ENCODE measurements at regions of chr15 and their contacts with region 1.

Region 1: GRCh38 chr15:40274350-40275274 is 8.3 kb downstream of the ANKRD63 start:
- DNase-seq: no peak
- H3K4me3 ChIP-seq: no peak overlapping the region
- H3K27me3 ChIP-seq: peaks cover 6% of the 10 kb centered on the region; the same call in 1 of the 2 replicates
- CTCF ChIP-seq: peak; percentile 100

Region 2: GRCh38 chr15:40038638-40039543 is 235.7 kb before region 1 on chr15 and contains the start of gene SRP14:
- CTCF ChIA-PET with region 1: interaction called, 35 read pairs
- POLR2A ChIA-PET with region 1: no interaction called
- DNase-seq: peak; percentile 60
- H3K4me3 ChIP-seq: peak within 1 kb of the TSS; percentile 99
- H3K27me3 ChIP-seq: no peaks in the 10 kb centered on the region
- CTCF ChIP-seq: no peak
- polyA plus RNA-seq, gene SRP14: 305 and 564 TPM in 2 replicates

Region 3: DNA sequence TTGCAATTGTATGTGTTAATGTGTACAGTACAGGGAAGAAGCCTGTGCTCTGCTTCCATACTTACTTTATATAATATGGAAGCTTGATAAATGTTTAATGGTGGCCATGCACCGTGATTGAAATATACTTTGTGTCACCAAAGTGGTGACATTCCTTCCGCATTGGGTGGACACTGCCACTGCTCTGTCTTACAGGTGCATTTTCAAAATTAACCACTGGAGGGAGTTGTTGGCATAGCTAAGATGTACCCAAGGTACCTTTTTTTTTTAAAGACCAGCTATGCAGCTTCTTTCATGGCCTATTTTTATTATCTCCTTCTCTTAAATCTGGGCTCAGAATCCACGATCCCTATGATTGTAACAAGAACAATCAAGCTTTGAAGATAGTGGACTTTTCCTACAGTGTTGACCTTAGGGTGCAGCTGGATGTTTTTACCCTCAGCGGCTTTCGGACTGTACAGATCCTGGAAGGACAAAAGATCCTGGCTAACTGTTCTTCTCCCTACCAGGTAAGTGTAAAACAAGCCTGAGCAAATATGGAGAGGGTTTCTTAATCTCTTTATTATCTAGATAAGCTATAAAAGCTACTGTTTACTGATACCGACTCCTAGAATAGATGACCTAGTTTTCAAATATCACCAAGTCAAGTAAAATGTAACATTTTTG is 57.3 kb before region 1 on chr15:
- CTCF ChIA-PET with region 1: interaction called, 494 read pairs
- POLR2A ChIA-PET with region 1: no interaction called
- DNase-seq: no peak
- H3K4me3 ChIP-seq: no peak overlapping the region
- H3K27me3 ChIP-seq: no peaks in the 10 kb centered on the region
- CTCF ChIP-seq: peak; percentile 72

Region 4: DNA sequence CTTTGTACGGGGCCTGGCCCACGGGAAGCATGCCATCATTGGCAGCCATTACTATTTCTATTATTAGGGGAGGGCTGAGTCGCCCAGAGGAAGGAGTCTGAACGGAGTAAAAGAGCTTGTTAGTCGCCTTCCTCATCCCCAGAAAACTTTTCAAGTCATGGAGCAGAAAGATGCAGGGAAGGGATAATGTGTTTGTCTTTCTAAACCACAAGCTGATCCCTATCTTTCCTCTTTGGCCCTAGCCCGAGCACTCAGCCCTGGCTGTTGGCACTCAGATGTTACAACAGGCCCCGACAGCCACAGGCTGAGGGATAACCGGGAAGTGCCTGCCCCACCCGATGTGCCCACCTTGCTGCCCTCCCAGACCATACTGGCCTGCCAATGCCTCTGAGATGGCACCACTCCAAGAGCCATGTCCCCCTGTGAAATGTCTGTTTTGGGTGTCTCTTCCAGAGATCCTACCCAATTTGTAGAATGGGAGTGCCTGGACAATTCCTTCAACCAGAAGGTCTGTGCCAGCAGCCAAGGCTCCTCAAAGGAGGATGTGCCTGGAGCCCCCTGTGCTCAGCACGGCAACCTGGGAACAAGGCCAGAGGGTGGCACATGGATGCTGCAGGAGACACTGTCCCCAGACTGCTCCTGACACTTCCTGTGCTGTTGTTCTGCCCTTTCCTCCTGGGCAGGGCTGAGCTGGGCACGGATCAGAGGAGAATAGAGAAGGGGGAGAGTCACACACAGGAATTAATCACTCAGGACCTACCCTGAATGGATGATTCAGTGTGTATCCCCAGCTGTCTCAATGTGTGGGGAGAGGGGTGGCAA is 24.9 kb before region 1 on chr15:
- CTCF ChIA-PET with region 1: interaction called, 19 read pairs
- POLR2A ChIA-PET with region 1: no interaction called
- DNase-seq: no peak
- H3K4me3 ChIP-seq: no peak overlapping the region
- H3K27me3 ChIP-seq: peaks cover 61% of the 10 kb centered on the region
- CTCF ChIP-seq: no peak

Region 5: DNA sequence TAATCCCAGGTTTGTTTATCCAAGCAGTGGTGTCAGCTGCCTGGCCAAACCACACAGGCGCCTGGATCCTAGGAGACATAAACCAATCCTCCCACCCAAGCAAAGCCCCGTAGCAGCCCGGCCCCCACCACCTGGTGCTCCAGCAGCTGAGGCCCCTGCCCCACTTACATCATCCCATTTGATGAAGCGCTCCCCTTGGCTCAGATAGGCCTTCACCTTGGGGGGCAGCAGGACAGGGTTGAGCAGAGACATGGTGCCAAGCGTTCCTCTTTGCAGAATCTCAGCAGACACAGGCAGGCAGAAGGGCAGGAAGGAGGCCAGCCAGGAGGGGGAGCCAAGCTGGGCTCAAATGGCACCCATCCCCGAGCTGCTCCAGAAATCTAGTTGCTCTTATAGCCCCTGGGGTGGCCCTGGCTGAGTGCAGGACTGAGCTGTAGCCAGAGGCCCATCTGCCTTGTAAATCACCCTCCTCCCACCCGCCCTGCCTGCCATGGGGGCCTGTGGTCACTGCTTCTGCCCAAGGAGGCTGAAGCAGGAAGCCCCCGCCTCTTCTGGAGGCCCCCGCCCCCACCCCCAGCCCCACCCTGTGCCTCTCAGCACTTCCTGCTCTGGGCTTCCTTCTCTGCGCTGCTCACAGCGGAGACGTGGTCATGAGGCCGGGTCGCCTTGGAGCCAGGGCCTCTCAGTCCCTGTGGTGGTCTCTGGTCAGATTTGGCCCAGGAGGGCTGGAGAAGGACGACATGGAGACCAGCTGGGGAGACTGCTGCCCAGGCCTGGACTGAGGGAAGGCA is 33.0 kb after region 1 on chr15 and contains the start of gene PLCB2:
- CTCF ChIA-PET with region 1: interaction called, 127 read pairs
- POLR2A ChIA-PET with region 1: no interaction called
- DNase-seq: no peak
- H3K4me3 ChIP-seq: no peak within 1 kb of the TSS
- H3K27me3 ChIP-seq: peaks cover 25% of the 10 kb centered on the region
- CTCF ChIP-seq: 0 out of 2 replicates have a peak, but pooled peaks have one; percentile 27
- polyA plus RNA-seq, gene PLCB2: 0.22 and 0.47 TPM in 2 replicates

Region 6: GRCh38 chr15:40344631-40345120 is 70.1 kb after region 1 on chr15:
- CTCF ChIA-PET with region 1: interaction called, 58 read pairs
- POLR2A ChIA-PET with region 1: no interaction called
- DNase-seq: no peak
- H3K4me3 ChIP-seq: no peak overlapping the region
- H3K27me3 ChIP-seq: no peaks in the 10 kb centered on the region
- CTCF ChIP-seq: peak; percentile 81

Region 7: GRCh38 chr15:41031232-41032078 is 756.8 kb after region 1 on chr15:
- CTCF ChIA-PET with region 1: no interaction called
- POLR2A ChIA-PET with region 1: no interaction called
- DNase-seq: no peak
- H3K4me3 ChIP-seq: no peak overlapping the region
- H3K27me3 ChIP-seq: no peaks in the 10 kb centered on the region
- CTCF ChIP-seq: no peak